GM12878 (cell line): ENCODE measurements at regions of chr15 and their contacts with region 1.

Region 1: DNA sequence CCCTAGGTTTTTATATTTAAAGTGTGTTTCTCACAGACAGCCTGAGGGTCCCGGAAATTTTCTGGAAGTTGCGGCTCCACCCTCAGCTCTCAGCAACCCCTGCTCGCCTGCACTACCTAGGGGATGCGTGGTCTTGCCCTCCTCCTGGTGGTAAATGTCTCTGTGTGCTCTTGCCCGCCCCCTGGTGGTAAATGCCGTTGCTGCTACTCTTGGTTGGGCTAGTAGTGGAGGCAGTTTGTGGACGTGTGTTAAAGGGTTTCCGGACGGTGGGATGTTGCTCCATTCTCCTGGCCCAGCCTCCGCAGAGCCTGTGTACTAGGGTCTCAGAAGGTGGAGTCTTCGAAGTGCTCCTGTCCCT is 27.4 kb downstream of the STOML1 start:
- DNase-seq: no peak
- ATAC-seq: peak; percentile 91
- H3K4me3 ChIP-seq: peak overlapping the region; percentile 50; the same call in 1 of the 2 replicates
- H3K27ac ChIP-seq: peak overlapping the region; percentile 86
- H3K4me1 ChIP-seq: peaks cover 22% of the 10 kb centered on the region
- H3K27me3 ChIP-seq: no peaks in the 10 kb centered on the region
- CTCF ChIP-seq: peak; percentile 90 to 97 (median 96)
- EP300 ChIP-seq: no peak
- POLR2A ChIP-seq: no peak
- RAD21 ChIP-seq: peak; percentile 62

Region 2: GRCh38 chr15:73838831-73839426 is 125.8 kb before region 1 on chr15:
- CTCF ChIA-PET with region 1: no interaction called
- POLR2A ChIA-PET with region 1: no interaction called
- RAD21 ChIA-PET with region 1: no interaction called
- SMC1A ChIA-PET with region 1: no interaction called
- in situ Hi-C with region 1: no loop called
- intact Hi-C with region 1: no loop called
- DNase-seq: no peak
- ATAC-seq: no peak
- H3K4me3 ChIP-seq: no peak overlapping the region
- H3K27ac ChIP-seq: no peak overlapping the region
- H3K4me1 ChIP-seq: no peaks in the 10 kb centered on the region
- H3K27me3 ChIP-seq: peaks cover 0 to 4% of the 10 kb centered on the region in 2 experiments; a peak in 2 of 4 replicates
- CTCF ChIP-seq: no peak
- EP300 ChIP-seq: no peak
- POLR2A ChIP-seq: no peak
- RAD21 ChIP-seq: no peak

Region 3: DNA sequence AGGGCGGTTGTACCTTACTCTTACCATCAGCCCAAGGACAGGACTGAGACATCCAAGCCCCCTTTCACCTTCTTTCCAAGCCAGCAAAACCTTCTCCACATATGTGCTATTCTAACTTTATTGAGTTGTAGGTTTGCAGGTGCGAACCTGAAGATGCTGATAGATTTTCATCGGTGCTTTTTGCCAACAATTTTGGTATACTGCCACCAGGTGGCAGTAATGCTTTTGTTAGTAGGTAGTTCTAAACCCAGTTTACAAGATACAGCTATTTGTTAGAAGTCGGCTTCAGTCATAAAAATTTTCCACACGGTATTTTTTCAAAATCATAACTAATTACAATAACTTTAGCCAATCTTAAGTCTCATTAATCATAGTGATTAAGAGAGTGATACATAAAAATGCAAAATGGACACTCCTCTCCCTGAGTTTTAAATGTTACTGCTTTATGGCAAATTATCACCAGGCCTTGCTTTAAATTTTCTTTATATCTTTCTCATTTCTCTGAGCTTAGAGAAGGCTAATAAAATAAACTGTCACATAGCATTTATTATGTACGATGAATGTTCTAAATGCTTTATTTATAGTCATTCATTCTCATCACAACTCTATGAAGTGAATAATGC is 90.7 kb before region 1 on chr15:
- CTCF ChIA-PET with region 1: interaction called, 11 read pairs
- POLR2A ChIA-PET with region 1: no interaction called
- RAD21 ChIA-PET with region 1: no interaction called
- SMC1A ChIA-PET with region 1: no interaction called
- in situ Hi-C with region 1: no loop called
- intact Hi-C with region 1: no loop called
- DNase-seq: no peak
- ATAC-seq: peak; percentile 59
- H3K4me3 ChIP-seq: no peak overlapping the region
- H3K27ac ChIP-seq: no peak overlapping the region
- H3K4me1 ChIP-seq: no peaks in the 10 kb centered on the region
- H3K27me3 ChIP-seq: peaks cover 3 to 5% of the 10 kb centered on the region in 2 experiments; a peak in 3 of 4 replicates
- CTCF ChIP-seq: peak; percentile 52 to 70 (median 62)
- EP300 ChIP-seq: no peak
- POLR2A ChIP-seq: no peak
- RAD21 ChIP-seq: peak; percentile 57

Region 4: DNA sequence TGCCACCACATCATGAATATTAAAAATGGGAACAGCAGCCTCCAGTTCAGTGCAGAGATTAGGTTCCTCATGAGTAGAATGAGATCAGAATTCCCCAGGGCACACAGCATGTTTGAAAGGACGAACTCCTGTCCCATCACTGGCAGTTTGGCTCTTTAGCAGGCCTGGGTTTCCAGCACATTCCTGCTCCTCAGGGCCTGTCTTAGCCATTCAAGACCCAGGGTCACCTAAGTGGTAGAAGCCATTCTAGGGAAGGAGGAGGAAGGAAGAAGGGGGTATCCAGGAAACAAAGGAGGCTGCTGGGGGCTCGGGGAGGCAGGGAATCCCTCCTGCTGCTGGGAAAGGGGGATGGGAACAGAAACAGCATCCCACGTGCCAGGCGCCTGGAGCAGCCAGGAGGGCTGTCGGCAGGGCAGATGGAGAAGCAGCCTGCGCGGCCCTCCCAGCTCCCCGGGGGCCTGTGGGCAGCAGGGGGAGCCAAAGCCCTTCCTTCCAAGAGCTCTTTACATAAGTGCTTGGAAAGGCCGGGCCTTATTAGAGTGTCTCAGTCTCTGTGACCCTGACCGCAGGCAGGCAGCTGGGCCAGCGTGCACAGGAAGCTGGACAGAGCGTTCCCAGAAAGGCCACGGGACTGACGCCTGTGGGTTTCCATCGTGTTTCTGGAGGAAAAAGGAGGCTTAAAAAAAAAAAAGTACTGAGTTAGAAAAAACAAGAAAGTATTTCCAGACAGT is 13.7 kb before region 1 on chr15:
- CTCF ChIA-PET with region 1: interaction called, 20 read pairs
- POLR2A ChIA-PET with region 1: no interaction called
- RAD21 ChIA-PET with region 1: interaction called, 10 read pairs
- SMC1A ChIA-PET with region 1: no interaction called
- in situ Hi-C with region 1: no loop called
- intact Hi-C with region 1: loop called (anchors 1 kb)
- DNase-seq: no peak
- ATAC-seq: peak; percentile 97
- H3K4me3 ChIP-seq: no peak overlapping the region
- H3K27ac ChIP-seq: no peak overlapping the region
- H3K4me1 ChIP-seq: no peaks in the 10 kb centered on the region
- H3K27me3 ChIP-seq: no peaks in the 10 kb centered on the region; a peak in 1 of 4 replicates
- CTCF ChIP-seq: peak; percentile 63 to 77 (median 72)
- EP300 ChIP-seq: no peak
- POLR2A ChIP-seq: no peak
- RAD21 ChIP-seq: peak; percentile 74

Region 5: DNA sequence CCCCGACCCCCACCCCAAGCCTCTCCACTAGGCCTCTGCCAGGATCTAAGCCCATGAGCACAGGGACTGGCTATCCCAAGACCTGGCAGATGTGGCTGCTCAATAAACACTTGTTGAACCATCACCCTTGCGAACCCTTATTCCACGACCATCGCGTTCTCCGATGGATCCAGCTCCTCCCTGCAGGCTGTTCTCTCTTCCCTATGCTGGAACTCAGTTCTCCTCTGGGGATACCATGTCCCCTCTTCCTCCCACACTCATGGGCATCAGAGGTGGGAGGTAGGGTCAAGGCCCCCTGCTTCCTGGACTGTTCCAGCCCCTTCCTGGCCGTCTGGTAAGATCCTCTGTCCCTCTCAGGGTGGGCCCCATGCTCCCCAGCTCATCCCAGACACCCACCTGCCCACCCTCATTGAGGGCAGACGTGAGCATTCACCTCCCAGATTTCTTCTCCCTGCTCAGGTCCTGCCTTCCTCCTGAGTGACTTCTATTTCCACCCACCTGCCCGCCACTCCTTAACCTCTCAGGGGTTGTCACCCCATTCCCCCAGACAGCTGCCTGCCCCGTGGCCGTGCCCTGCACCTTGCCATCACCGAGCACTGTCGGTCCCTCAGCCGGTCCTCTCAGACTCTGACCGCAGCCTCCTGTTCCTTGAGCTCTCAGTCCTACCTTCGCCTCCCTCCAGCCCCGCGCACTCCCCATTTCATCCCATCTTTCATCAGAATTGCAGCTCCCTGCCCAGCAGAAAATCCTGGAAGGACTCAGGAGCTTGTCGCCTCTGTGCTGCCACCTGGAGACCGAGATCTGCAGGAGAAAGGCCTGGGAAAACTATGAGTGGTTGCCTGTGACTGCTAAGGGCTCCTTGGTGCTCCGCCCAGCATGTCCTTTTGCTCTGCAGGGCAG is 71.8 kb after region 1 on chr15:
- CTCF ChIA-PET with region 1: interaction called, 10 read pairs
- POLR2A ChIA-PET with region 1: no interaction called
- RAD21 ChIA-PET with region 1: no interaction called
- SMC1A ChIA-PET with region 1: no interaction called
- in situ Hi-C with region 1: no loop called
- intact Hi-C with region 1: no loop called
- DNase-seq: no peak
- ATAC-seq: no peak
- H3K4me3 ChIP-seq: no peak overlapping the region
- H3K27ac ChIP-seq: no peak overlapping the region
- H3K4me1 ChIP-seq: no peaks in the 10 kb centered on the region
- H3K27me3 ChIP-seq: no peaks in the 10 kb centered on the region
- CTCF ChIP-seq: peak; percentile 23 to 32 (median 23); a peak in 3 of 6 replicates
- EP300 ChIP-seq: no peak
- POLR2A ChIP-seq: peak; percentile 56
- RAD21 ChIP-seq: 0 out of 2 replicates have a peak, but pooled peaks have one; percentile 30

Region 6: GRCh38 chr15:74307827-74308644 is 343.3 kb after region 1 on chr15:
- CTCF ChIA-PET with region 1: no interaction called
- POLR2A ChIA-PET with region 1: no interaction called
- RAD21 ChIA-PET with region 1: no interaction called
- SMC1A ChIA-PET with region 1: no interaction called
- in situ Hi-C with region 1: loop called (anchors 10 kb)
- intact Hi-C with region 1: no loop called
- DNase-seq: no peak
- ATAC-seq: peak; percentile 89
- H3K4me3 ChIP-seq: no peak overlapping the region
- H3K27ac ChIP-seq: no peak overlapping the region
- H3K4me1 ChIP-seq: no peaks in the 10 kb centered on the region
- H3K27me3 ChIP-seq: peaks cover 0 to 2% of the 10 kb centered on the region in 2 experiments; a peak in 2 of 4 replicates
- CTCF ChIP-seq: peak; percentile 68 to 79 (median 75)
- EP300 ChIP-seq: no peak
- POLR2A ChIP-seq: no peak
- RAD21 ChIP-seq: peak; percentile 94